ENCODE measurements at regions of chr17 and their contacts with region 1.

Region 1: GRCh38 chr17:58631523-58632323 is 60.1 kb downstream of the TEX14 start:
- DNase-seq: peak; percentile 96
- ATAC-seq: peak; percentile 97
- H3K4me3 Mint-ChIP-seq: no peak overlapping the region
- H3K27ac Mint-ChIP-seq: no peak overlapping the region
- H3K4me1 Mint-ChIP-seq: peaks cover 3% of the 10 kb centered on the region
- H3K27me3 Mint-ChIP-seq: no peaks in the 10 kb centered on the region

Region 2: DNA sequence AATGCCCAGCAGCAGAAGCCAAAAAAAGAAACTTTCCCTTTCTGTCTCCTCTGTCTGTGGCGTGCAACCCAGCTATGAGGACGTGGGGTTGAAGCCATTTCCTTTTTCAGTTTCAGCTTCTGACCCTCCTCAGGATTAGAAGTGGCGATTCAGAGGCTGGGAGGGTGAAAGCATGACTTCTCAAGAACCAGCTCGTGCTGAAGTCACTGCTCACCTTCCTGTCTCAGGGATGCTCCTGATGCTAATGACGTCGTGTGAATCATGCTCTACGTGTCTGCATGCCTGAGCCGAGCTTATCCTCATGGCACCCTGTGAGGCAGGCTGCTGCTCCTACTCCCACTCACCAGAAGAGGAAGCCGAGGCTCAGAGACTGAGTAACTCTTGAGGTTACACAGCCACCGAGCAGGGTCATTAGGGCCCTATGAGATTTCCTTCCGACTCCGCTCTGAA is 399.0 kb before region 1 on chr17:
- CTCF ChIA-PET with region 1: no interaction called
- POLR2A ChIA-PET with region 1: no interaction called
- intact Hi-C with region 1: no loop called
- DNase-seq: peak; percentile 72
- ATAC-seq: peak; percentile 96
- H3K4me3 Mint-ChIP-seq: no peak overlapping the region
- H3K27ac Mint-ChIP-seq: no peak overlapping the region
- H3K4me1 Mint-ChIP-seq: peaks cover 9% of the 10 kb centered on the region
- H3K27me3 Mint-ChIP-seq: peaks cover 28% of the 10 kb centered on the region

Region 3: DNA sequence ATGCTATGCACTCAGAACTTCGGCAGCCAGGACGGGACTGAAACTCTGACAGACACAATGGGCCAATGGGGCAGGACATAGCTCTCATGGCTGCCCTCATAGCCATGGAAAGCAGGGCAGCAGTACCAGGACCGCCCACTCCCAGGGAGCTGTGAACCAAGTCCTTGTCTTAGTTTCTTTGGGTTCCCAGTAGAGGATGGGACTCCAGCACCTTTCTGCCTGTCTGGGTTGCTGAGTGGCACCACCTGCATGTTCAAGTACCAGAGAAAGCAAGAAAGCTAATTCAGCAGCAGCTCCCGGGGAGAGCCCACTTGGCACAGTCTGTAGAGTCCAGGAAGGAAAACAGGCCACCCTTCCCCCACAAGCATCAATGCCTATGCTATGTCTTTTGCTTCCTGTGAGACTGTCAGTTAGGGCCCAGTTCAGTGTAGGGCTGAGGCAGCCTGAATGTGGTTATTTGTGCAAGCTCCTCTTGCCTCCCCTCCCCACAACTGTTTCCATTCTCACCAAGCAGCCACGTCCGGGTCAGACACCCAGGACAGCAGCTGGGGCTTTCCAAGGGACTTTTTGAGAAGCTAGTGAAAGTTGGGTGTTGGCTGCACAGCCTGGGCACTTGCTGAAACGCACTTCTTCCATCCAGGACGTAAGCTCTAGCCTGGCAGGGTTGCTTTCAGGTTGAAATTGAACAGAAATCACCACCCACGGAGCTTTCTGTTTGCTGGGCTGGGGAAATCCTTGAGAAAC is 287.5 kb before region 1 on chr17:
- CTCF ChIA-PET with region 1: interaction called, 4 read pairs
- POLR2A ChIA-PET with region 1: interaction called, 14 read pairs
- intact Hi-C with region 1: loop called (anchors 5 to 10 kb)
- DNase-seq: peak; percentile 95
- ATAC-seq: peak; percentile 76
- H3K4me3 Mint-ChIP-seq: peak overlapping the region; percentile 100
- H3K27ac Mint-ChIP-seq: peak overlapping the region; percentile 99
- H3K4me1 Mint-ChIP-seq: peaks cover 74% of the 10 kb centered on the region
- H3K27me3 Mint-ChIP-seq: no peaks in the 10 kb centered on the region

Region 4: DNA sequence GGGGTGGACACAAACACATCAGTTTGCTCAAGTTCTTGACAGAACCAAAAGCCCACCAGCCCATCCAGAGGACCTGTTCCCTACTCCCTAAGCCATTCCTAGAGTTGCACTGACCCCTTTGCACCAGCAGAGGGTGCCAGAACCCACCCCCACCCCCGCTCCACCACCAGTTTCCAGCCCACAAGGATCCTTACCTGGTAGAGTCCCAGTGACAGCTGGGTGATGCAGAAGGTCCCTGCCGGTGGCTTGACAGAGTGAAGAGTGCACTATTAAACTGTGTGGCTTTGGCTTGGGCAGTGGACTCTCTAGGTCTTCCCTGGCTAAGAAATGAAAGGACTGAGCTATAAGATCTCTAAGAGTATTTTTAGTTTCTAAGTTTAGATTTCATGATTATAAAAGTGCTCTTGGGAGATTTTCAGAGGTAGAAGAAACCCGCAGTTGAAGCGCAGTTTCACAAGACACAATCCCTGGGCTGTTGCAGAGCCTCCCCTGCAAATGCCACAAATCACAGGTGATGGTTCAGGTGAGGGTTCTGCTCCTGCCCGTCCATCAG is 43.9 kb before region 1 on chr17:
- CTCF ChIA-PET with region 1: interaction called, 4 read pairs
- POLR2A ChIA-PET with region 1: interaction called, 7 read pairs
- intact Hi-C with region 1: loop called (anchors 1 to 2 kb)
- DNase-seq: peak; percentile 79
- ATAC-seq: peak; percentile 97
- H3K4me3 Mint-ChIP-seq: no peak overlapping the region
- H3K27ac Mint-ChIP-seq: no peak overlapping the region
- H3K4me1 Mint-ChIP-seq: no peaks in the 10 kb centered on the region
- H3K27me3 Mint-ChIP-seq: no peaks in the 10 kb centered on the region

Region 5: DNA sequence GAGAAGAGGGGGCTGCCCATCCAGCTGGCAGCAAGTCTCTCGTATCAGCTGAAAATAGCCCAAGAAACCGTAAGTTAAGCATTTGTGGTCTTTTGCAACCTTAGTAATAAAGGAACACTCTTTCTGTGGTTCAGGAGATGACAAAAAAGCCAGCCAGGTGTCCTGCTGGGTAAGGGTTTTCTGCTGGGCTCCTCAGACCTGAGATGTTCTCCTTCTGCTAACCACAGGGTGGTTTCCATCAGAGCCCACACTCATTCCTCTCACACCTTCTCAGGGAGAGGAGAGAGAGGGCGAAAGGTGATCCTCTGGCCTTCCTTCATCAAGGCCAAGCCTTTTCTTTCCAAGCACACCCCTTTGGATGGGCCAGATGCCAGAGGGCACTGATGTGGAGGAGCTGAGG is 10.5 kb before region 1 on chr17:
- CTCF ChIA-PET with region 1: interaction called, 3 read pairs
- POLR2A ChIA-PET with region 1: interaction called, 11 read pairs
- intact Hi-C with region 1: no loop called
- DNase-seq: no peak
- ATAC-seq: no peak
- H3K4me3 Mint-ChIP-seq: no peak overlapping the region
- H3K27ac Mint-ChIP-seq: no peak overlapping the region
- H3K4me1 Mint-ChIP-seq: no peaks in the 10 kb centered on the region
- H3K27me3 Mint-ChIP-seq: no peaks in the 10 kb centered on the region

Region 6: GRCh38 chr17:58658804-58659713 is 27.3 kb after region 1 on chr17:
- CTCF ChIA-PET with region 1: interaction called, 6 read pairs
- POLR2A ChIA-PET with region 1: interaction called, 421 read pairs
- intact Hi-C with region 1: loop called (anchors 1 kb)
- DNase-seq: peak; percentile 84
- ATAC-seq: peak; percentile 91
- H3K4me3 Mint-ChIP-seq: peak overlapping the region; percentile 70
- H3K27ac Mint-ChIP-seq: peak overlapping the region; percentile 97
- H3K4me1 Mint-ChIP-seq: peaks cover 18% of the 10 kb centered on the region
- H3K27me3 Mint-ChIP-seq: peaks cover 3% of the 10 kb centered on the region

Region 7: DNA sequence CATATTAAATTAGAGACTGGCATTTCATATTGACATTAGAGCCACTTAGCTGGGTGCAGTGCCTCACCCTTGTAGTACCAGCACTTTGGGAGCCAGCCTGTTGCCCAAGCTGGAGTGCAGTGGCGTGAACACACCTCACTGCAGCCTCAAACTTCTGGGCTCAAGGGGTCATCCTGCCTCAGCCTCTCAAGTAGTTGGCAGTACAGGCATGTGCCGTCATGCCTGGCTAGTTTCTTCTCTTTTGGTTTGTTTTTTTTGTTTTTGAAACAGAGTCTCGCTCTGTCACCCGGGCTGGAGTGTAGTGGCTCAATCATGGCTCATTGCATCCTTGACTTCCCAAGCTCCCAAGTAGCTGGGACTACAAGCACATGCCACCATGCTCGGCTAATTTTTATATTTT is 132.7 kb after region 1 on chr17:
- CTCF ChIA-PET with region 1: no interaction called
- POLR2A ChIA-PET with region 1: no interaction called
- intact Hi-C with region 1: no loop called
- DNase-seq: no peak
- ATAC-seq: no peak
- H3K4me3 Mint-ChIP-seq: no peak overlapping the region
- H3K27ac Mint-ChIP-seq: no peak overlapping the region
- H3K4me1 Mint-ChIP-seq: no peaks in the 10 kb centered on the region
- H3K27me3 Mint-ChIP-seq: peaks cover 25% of the 10 kb centered on the region

Region 8: DNA sequence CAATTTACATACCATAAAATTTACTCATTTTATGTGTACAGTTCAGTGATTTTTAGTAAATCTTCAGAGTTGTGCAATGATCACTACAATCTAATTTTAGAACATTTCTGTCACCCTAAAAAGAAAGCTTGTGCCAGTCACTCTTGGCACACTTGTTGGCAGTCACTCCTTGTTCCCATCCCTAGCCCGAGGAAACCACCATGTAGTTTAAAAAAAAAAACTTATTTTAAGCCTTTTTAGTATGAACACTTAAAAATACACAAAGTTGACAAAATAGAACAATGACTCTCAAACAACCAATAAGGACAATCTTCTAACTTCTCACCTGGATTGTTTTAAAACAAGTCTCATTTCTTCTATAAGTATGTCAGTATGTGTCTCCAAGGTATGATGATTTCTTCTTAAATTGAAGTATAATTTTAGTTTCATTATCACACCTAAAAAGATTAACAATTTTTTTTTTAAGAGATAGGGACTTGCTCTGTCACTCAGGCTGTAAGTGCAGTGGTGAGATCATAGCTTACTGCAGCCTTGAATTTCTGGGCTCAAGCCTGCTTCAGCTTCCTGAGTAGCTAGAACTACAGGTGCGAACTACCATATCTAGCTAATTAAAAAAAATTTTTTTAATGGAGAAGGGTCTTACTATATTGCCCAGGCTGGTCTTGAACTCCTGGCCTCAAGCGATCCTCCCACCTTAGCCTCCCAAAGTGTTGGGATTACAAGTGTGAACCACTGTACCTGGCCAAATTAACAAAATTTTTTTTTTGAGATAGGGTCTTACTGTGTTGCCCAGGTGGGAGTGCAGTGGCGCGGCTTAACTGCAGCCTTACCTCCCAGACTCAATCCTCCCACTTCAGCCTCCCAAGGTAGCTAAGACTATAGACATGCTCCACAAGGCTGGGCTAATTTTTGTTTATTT is 177.2 kb after region 1 on chr17:
- CTCF ChIA-PET with region 1: no interaction called
- POLR2A ChIA-PET with region 1: no interaction called
- intact Hi-C with region 1: no loop called
- DNase-seq: no peak
- ATAC-seq: no peak
- H3K4me3 Mint-ChIP-seq: no peak overlapping the region
- H3K27ac Mint-ChIP-seq: no peak overlapping the region
- H3K4me1 Mint-ChIP-seq: no peaks in the 10 kb centered on the region
- H3K27me3 Mint-ChIP-seq: peaks cover 14% of the 10 kb centered on the region

Region 9: GRCh38 chr17:59004338-59005111 is 372.8 kb after region 1 on chr17:
- CTCF ChIA-PET with region 1: no interaction called
- POLR2A ChIA-PET with region 1: interaction called, 5 read pairs
- intact Hi-C with region 1: loop called in 1 of 2 experiments (anchors 1 kb)
- DNase-seq: peak; percentile 81
- ATAC-seq: no peak
- H3K4me3 Mint-ChIP-seq: no peak overlapping the region
- H3K27ac Mint-ChIP-seq: peak overlapping the region; percentile 55
- H3K4me1 Mint-ChIP-seq: peaks cover 34% of the 10 kb centered on the region
- H3K27me3 Mint-ChIP-seq: no peaks in the 10 kb centered on the region

Measured in activated CD4-positive, alpha-beta T cell treated with anti-CD3 and anti-CD28 coated beads for 36 hours (primary cell).